AG04449 (cell line): ENCODE measurements at regions of chr18 and their contacts with region 1.

Region 1: GRCh38 chr18:22451796-22452195 is 34.1 kb upstream of the CTAGE1 start:
- DNase-seq: no peak
- H3K4me3 ChIP-seq: no peak overlapping the region
- CTCF ChIP-seq: no peak

Region 2: DNA sequence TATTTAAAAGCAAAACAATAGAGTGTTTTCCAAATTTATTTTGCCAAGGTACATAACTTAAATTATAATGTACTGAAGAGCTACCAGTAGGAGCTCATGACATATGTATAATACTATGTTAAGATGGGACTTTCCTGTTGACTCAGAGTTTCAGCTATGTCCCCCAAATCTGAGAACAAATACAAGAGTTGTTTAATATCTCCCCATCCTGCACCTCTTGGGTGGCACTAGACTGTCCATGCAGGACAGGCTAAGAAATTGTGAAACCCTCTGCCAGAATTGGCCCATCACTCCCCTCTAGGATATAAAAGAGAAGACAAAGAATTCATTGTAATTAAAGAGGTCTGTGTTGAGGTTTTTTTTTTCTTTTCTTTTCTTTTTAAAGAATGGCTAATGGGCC is 12.3 kb before region 1 on chr18:
- CTCF ChIA-PET with region 1: interaction called, 11 read pairs
- POLR2A ChIA-PET with region 1: no interaction called
- DNase-seq: no peak
- H3K4me3 ChIP-seq: no peak overlapping the region
- CTCF ChIP-seq: no peak